Activated CD4-positive, alpha-beta T cell treated with anti-CD3 and anti-CD28 coated beads, Interleukin-2, amount 10 ng/mL, durations not matched to agents 7 days and 5 days (primary cell): ENCODE measurements at regions of chr3 and their contacts with region 1.

Region 1: DNA sequence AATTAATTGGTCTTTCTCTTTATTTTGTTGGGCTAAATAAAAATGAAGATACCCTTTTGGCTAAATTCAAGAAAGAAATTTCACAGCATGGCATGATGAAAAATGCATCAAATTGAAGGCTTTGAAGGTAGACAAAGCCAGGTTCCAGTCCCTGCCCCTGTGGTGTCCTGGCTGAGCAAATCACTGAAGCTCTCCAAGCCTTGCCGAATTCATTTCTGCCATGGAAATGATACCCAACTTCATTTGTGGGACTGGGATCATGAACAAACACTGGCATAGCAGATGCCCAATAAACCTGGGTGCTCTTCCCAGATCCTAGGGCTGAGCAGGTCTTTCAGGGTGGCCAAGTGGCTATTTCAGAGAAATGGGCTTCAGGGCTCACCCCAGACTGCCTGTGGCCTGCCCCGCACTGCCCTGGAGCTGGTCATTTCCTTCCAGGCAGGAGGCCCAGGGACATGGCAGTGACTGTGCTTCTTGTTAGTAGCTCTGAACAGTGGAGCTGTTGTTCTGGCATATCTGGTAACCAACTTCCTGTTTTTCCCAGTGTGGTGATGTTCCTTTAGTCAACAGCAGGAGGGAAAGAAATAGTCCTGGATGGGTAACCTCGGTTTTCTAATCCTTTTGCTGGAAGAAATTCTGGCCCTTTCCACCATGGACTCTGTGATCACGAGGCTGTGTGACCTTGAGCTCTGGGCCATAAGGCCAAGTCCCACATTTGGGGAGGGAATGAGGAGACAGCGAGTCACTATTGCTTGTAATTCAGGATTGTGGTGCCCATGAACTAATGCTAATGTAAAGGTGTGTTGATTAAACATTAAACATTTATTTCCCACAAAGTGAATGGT is 47.6 kb downstream of the CTDSPL start:
- DNase-seq: no peak
- H3K4me3 Mint-ChIP-seq: no peak overlapping the region
- H3K27ac Mint-ChIP-seq: no peak overlapping the region
- H3K4me1 Mint-ChIP-seq: peaks cover 33% of the 10 kb centered on the region
- H3K27me3 Mint-ChIP-seq: peaks cover 6% of the 10 kb centered on the region

Region 2: GRCh38 chr3:37899101-37899707 is 10.1 kb before region 1 on chr3:
- CTCF ChIA-PET with region 1: interaction called, 11 read pairs
- POLR2A ChIA-PET with region 1: no interaction called
- DNase-seq: no peak
- H3K4me3 Mint-ChIP-seq: no peak overlapping the region
- H3K27ac Mint-ChIP-seq: no peak overlapping the region
- H3K4me1 Mint-ChIP-seq: peaks cover 40% of the 10 kb centered on the region
- H3K27me3 Mint-ChIP-seq: no peaks in the 10 kb centered on the region

Region 3: DNA sequence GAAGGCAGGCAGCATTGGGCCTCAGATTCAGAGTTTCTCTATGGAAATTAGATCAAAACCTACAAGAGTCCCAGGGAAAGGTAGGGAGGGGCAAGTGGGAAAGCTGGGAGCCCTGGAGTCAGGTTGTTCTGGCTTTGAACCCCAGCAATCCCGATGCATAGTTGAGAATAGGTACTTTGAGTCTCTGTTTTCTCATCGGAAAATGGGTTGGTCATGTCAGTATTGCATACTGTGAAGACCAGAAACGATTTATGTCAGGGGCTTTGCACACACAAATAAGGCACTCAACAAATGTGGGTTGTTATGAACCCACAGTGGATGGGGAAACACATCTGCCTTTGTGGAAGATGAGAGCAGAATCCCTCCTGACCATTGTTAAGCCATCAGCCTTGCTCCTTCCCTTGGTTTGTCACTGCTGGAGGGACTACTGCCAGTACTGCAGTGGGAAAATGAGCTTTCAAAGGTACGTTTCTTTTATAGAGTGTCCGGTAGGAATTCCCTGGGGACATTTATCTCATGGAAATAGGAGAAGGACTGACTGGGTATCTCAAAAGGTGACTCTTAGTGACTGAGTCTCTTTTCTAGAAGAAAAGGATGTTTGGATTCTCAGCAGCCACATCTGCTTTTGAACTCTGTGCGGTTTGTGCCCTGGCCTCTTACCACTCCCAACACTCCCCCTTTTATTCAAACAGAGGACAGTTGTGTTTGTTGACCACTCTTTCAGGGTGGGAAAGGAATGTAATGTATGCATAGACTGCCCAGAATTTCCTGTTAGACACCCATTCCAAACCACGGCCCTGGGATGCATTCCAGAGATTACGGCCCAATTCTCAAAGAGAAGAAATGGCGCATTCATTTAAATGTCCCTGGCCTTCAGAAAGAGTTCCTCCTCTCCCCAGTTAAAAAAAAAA is 26.7 kb after region 1 on chr3:
- CTCF ChIA-PET with region 1: no interaction called
- POLR2A ChIA-PET with region 1: no interaction called
- DNase-seq: no peak
- H3K4me3 Mint-ChIP-seq: no peak overlapping the region
- H3K27ac Mint-ChIP-seq: no peak overlapping the region
- H3K4me1 Mint-ChIP-seq: no peaks in the 10 kb centered on the region
- H3K27me3 Mint-ChIP-seq: peaks cover 4% of the 10 kb centered on the region

Region 4: GRCh38 chr3:38054291-38055001 is 145.2 kb after region 1 on chr3:
- CTCF ChIA-PET with region 1: no interaction called
- POLR2A ChIA-PET with region 1: no interaction called
- DNase-seq: no peak
- H3K4me3 Mint-ChIP-seq: no peak overlapping the region
- H3K27ac Mint-ChIP-seq: no peak overlapping the region
- H3K4me1 Mint-ChIP-seq: peaks cover 11% of the 10 kb centered on the region
- H3K27me3 Mint-ChIP-seq: no peaks in the 10 kb centered on the region